Naive thymus-derived CD4-positive, alpha-beta T cell (primary cell): ENCODE measurements at regions of chr11 and their contacts with region 1.

Region 1: DNA sequence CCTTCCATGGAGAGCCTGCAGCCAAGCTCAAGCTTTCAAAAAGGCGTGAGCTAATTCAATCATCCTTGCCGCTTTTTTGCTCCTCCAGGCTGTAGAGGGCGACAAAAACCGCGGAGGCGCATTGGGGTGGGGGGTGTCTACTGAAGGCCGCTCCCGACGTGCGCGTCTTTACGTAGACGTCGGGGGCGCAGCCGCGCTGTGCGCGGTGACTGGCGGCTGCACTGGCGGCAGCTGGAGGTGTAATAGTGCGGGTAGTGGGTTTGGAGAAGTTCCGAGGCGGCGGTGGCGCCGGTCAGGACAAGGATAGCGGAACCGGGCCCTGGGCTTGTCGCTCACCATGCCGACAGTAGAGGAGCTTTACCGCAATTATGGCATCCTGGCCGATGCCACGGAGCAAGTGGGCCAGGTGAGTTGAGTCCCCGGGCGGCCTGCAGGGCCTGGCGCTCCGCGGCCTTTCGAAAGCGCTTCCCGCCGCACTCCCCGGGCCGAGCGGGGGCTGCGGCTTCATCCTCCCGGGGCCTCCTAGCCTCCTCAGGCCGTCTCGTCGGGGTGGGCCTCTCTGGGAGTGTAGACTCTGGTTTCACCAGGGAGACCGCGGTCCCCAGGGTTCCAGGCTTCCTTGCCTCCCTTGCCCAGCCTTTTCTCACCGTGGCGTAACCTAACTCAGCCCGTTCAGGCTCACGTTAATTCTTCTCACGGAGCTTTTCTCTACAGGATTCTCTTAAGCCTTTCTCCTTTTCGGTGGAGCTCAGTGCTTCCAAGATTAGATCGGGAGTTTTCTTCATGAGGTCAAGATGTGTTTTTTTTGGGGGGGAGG is at the start of gene API5:
- DNase-seq: peak; percentile 79 to 94 (median 92)
- ATAC-seq: peak; percentile 99
- H3K4me3 ChIP-seq: peak within 1 kb of the TSS; percentile 60
- H3K4me3 Mint-ChIP-seq: peak within 1 kb of the TSS; percentile 90 to 99 (median 98)
- H3K27ac ChIP-seq: peak within 1 kb of the TSS; percentile 89
- H3K27ac Mint-ChIP-seq: peak within 1 kb of the TSS; percentile 86 to 98 (median 96)
- H3K4me1 ChIP-seq: peaks cover 20 to 25% of the 10 kb centered on the region in 2 donors
- H3K4me1 Mint-ChIP-seq: peaks cover 30 to 56% (median 51%) of the 10 kb centered on the region in 7 donors
- H3K27me3 ChIP-seq: no peaks in the 10 kb centered on the region
- H3K27me3 Mint-ChIP-seq: peaks cover 0 to 2% (median 0%) of the 10 kb centered on the region in 5 donors
- total RNA-seq, gene API5: 59.8 to 138 (median 91.2) TPM

Region 2: DNA sequence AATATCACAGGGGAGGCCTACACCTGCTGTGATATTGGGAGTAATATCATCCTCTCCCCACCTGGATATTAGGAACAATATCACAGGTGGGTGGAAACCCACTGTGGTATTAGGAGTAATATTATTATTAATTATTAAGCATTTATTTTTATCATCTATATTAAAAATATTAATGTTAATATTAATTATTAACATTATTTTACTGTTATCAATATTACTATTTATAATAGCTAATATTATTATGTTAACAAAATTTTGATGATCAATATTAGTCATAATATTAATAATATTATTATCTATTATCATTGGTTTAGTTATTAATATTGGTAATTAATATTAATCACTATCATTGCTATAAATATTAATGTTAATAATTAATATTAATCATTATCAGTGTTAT is 161.3 kb before region 1 on chr11:
- CTCF ChIA-PET with region 1: no interaction called
- POLR2A ChIA-PET with region 1: no interaction called
- intact Hi-C with region 1: loop called in 1 of 2 experiments (anchors 2 kb)
- DNase-seq: no peak
- ATAC-seq: no peak
- H3K4me3 ChIP-seq: no peak overlapping the region
- H3K4me3 Mint-ChIP-seq: no peak overlapping the region
- H3K27ac ChIP-seq: no peak overlapping the region
- H3K27ac Mint-ChIP-seq: no peak overlapping the region
- H3K4me1 ChIP-seq: no peaks in the 10 kb centered on the region
- H3K4me1 Mint-ChIP-seq: peaks cover 0 to 9% (median 0%) of the 10 kb centered on the region in 7 donors
- H3K27me3 ChIP-seq: no peaks in the 10 kb centered on the region
- H3K27me3 Mint-ChIP-seq: peaks cover 0 to 10% (median 7%) of the 10 kb centered on the region in 5 donors

Region 3: DNA sequence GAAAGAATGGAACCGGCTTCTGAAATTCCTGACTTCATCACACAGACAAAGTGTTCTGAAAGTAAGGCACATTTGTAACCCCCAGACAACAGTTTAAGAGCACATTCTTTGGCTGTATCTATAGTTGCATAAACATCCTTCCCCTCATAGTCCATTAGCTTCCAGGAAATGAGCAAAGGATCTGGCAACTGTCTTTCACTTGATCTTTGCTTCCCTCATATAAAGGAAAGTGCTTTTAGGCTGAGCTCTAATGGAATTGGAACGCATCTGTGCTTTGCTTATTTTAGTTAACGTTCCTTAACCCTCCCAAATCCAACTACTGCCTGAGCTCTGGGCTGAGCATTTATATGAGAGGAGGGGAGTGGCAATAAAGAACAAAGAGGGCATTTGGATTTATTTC is 77.1 kb before region 1 on chr11:
- CTCF ChIA-PET with region 1: no interaction called
- POLR2A ChIA-PET with region 1: no interaction called
- intact Hi-C with region 1: no loop called
- DNase-seq: no peak
- ATAC-seq: no peak
- H3K4me3 ChIP-seq: no peak overlapping the region
- H3K4me3 Mint-ChIP-seq: no peak overlapping the region
- H3K27ac ChIP-seq: no peak overlapping the region
- H3K27ac Mint-ChIP-seq: no peak overlapping the region
- H3K4me1 ChIP-seq: no peaks in the 10 kb centered on the region
- H3K4me1 Mint-ChIP-seq: no peaks in the 10 kb centered on the region
- H3K27me3 ChIP-seq: peaks cover 0 to 5% of the 10 kb centered on the region in 2 donors
- H3K27me3 Mint-ChIP-seq: peaks cover 0 to 23% (median 9%) of the 10 kb centered on the region in 5 donors

Region 4: DNA sequence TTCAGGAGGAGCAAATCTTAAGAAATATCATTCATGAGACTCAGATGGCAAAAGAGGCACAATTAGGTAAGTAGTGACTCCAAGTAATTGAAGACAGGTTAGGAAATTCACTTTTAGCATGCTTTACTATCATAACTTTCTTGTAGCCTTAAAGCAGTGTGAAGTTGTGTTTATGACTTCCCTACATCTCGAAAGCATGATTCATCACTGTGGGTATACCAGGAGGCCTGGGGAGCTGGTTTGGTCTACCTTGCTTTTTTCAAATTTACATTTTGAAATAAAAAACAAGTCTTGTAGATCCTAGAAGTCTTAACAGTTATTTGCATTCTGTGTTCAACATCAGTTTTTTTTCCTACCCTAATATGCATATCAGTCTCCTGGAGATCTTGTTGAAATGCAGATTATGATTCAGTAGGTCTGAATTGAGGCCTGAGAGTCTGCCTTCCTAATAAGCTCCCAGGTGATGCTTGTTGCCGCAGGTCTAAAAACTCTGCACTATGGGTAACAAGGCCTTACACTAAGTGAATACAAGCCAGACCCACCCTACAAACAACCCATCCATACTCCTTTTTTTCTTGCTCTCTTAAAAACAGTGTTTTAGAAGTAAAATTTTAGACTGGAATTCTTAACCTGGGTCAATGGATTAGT is 88.1 kb after region 1 on chr11:
- CTCF ChIA-PET with region 1: interaction called, 3 read pairs
- POLR2A ChIA-PET with region 1: no interaction called
- intact Hi-C with region 1: loop called in 1 of 2 experiments (anchors 5 kb)
- DNase-seq: no peak
- ATAC-seq: no peak
- H3K4me3 ChIP-seq: no peak overlapping the region
- H3K4me3 Mint-ChIP-seq: no peak overlapping the region
- H3K27ac ChIP-seq: no peak overlapping the region
- H3K27ac Mint-ChIP-seq: peak overlapping the region in 2 of 9 donors; percentile 44 to 56
- H3K4me1 ChIP-seq: no peaks in the 10 kb centered on the region
- H3K4me1 Mint-ChIP-seq: peaks cover 0 to 31% (median 0%) of the 10 kb centered on the region in 7 donors
- H3K27me3 ChIP-seq: no peaks in the 10 kb centered on the region
- H3K27me3 Mint-ChIP-seq: no peaks in the 10 kb centered on the region

Region 5: GRCh38 chr11:43643898-43644620 is 332.1 kb after region 1 on chr11:
- CTCF ChIA-PET with region 1: no interaction called
- POLR2A ChIA-PET with region 1: no interaction called
- intact Hi-C with region 1: loop called (anchors 1 to 2 kb)
- DNase-seq: peak; percentile 70 to 89 (median 86)
- ATAC-seq: peak; percentile 100
- H3K4me3 ChIP-seq: peak overlapping the region; percentile 95
- H3K4me3 Mint-ChIP-seq: peak overlapping the region; percentile 87 to 98 (median 94)
- H3K27ac ChIP-seq: peak overlapping the region; percentile 85
- H3K27ac Mint-ChIP-seq: peak overlapping the region; percentile 51 to 95 (median 90)
- H3K4me1 ChIP-seq: peaks cover 7 to 10% of the 10 kb centered on the region in 2 donors
- H3K4me1 Mint-ChIP-seq: peaks cover 7 to 31% (median 23%) of the 10 kb centered on the region in 7 donors
- H3K27me3 ChIP-seq: no peaks in the 10 kb centered on the region
- H3K27me3 Mint-ChIP-seq: peaks cover 12 to 18% (median 17%) of the 10 kb centered on the region in 5 donors

Region 6: DNA sequence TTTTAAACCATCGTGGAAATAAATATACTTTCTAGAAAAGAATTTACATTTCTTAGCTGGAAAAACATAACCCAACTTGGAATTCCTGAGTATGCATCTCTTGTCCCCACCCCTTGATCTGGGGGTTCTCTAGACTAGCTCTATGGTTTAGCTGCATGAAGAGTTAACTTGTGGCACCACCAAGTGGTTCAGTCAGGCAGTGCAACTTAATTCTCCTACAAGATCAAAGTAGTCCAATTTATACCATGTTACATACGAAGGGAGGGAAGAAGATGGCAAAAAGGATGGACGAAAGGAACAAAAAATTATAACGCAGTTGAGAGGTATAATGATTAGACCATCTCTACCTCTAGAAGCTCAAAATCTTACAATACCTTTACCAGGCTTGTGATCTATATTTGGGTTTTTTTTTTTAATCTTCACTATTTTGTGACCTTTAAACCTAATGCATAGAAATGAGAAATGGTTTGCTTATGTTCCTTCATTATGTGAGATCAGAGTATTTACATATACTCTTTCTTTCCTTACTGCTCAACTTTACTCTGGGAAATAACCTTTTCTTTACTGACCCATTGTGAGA is 540.1 kb after region 1 on chr11:
- CTCF ChIA-PET with region 1: no interaction called
- POLR2A ChIA-PET with region 1: no interaction called
- intact Hi-C with region 1: loop called in 1 of 2 experiments (anchors 1 kb)
- DNase-seq: peak; percentile 7 to 57 (median 40)
- ATAC-seq: peak; percentile 84
- H3K4me3 ChIP-seq: no peak overlapping the region
- H3K4me3 Mint-ChIP-seq: no peak overlapping the region
- H3K27ac ChIP-seq: no peak overlapping the region
- H3K27ac Mint-ChIP-seq: no peak overlapping the region
- H3K4me1 ChIP-seq: no peaks in the 10 kb centered on the region
- H3K4me1 Mint-ChIP-seq: peaks cover 4 to 7% (median 6%) of the 10 kb centered on the region in 7 donors
- H3K27me3 ChIP-seq: no peaks in the 10 kb centered on the region
- H3K27me3 Mint-ChIP-seq: no peaks in the 10 kb centered on the region

Region 7: GRCh38 chr11:43880640-43881159 is 568.7 kb after region 1 on chr11 and contains the start of gene ALKBH3:
- CTCF ChIA-PET with region 1: no interaction called
- POLR2A ChIA-PET with region 1: no interaction called
- intact Hi-C with region 1: loop called in 1 of 2 experiments (anchors 1 kb)
- DNase-seq: peak; percentile 78 to 92 (median 90)
- ATAC-seq: peak; percentile 100
- H3K4me3 ChIP-seq: peak within 1 kb of the TSS; percentile 90
- H3K4me3 Mint-ChIP-seq: peak within 1 kb of the TSS; percentile 87 to 96 (median 90)
- H3K27ac ChIP-seq: peak within 1 kb of the TSS; percentile 80
- H3K27ac Mint-ChIP-seq: peak within 1 kb of the TSS; percentile 82 to 97 (median 88)
- H3K4me1 ChIP-seq: peaks cover 16 to 19% of the 10 kb centered on the region in 2 donors
- H3K4me1 Mint-ChIP-seq: peaks cover 12 to 47% (median 36%) of the 10 kb centered on the region in 7 donors
- H3K27me3 ChIP-seq: no peaks in the 10 kb centered on the region
- H3K27me3 Mint-ChIP-seq: peaks cover 0 to 22% (median 13%) of the 10 kb centered on the region in 5 donors
- total RNA-seq, gene ALKBH3: 28.9 to 32.8 (median 30.2) TPM